ENCODE measurements at regions of chr9 and their contacts with region 1.

Region 1: GRCh38 chr9:20728493-20729220 is 44.6 kb downstream of the FOCAD start:
- DNase-seq: peak; percentile 91
- H3K4me3 ChIP-seq: no peak overlapping the region
- H3K27ac ChIP-seq: peak overlapping the region; percentile 98
- H3K4me1 ChIP-seq: peaks cover 57% of the 10 kb centered on the region
- H3K27me3 ChIP-seq: no peaks in the 10 kb centered on the region
- CTCF ChIP-seq: no peak
- POLR2A ChIP-seq: no peak

Region 2: DNA sequence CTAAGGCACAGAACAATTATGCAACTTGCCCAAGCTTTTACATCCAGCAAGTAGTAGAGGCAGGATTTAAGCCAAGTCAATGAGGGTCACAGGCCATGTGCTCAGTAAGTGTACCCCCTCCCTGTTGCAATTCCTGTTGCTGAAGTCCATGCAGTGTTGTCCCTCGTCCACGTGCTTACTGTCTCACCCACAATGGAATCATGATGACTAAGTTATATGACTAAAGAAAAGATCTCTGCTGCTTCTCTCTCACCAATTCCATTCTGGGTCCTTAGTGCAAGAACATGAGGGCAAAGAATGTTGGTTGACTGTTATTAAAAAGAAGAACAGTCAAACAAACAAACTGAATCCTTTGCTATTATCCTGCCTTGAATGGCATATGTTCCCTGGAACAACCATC is 706.2 kb before region 1 on chr9:
- CTCF ChIA-PET with region 1: no interaction called
- POLR2A ChIA-PET with region 1: no interaction called
- dilution Hi-C with region 1: no loop called
- intact Hi-C with region 1: loop called (anchors 10 kb)
- DNase-seq: peak; percentile 15
- H3K4me3 ChIP-seq: no peak overlapping the region
- H3K27ac ChIP-seq: no peak overlapping the region
- H3K4me1 ChIP-seq: peaks cover 1% of the 10 kb centered on the region
- H3K27me3 ChIP-seq: peaks cover 0 to 2% of the 10 kb centered on the region in 2 experiments
- CTCF ChIP-seq: no peak
- POLR2A ChIP-seq: no peak

Region 3: GRCh38 chr9:20684035-20684872 is 44.4 kb before region 1 on chr9 and contains the start of gene FOCAD:
- CTCF ChIA-PET with region 1: interaction called, 4 read pairs
- POLR2A ChIA-PET with region 1: interaction called, 13 read pairs
- dilution Hi-C with region 1: no loop called
- intact Hi-C with region 1: loop called (anchors 1 kb)
- DNase-seq: peak; percentile 97
- H3K4me3 ChIP-seq: peak within 1 kb of the TSS; percentile 69 to 83 (median 73)
- H3K27ac ChIP-seq: peak within 1 kb of the TSS; percentile 91
- H3K4me1 ChIP-seq: peaks cover 30% of the 10 kb centered on the region
- H3K27me3 ChIP-seq: no peaks in the 10 kb centered on the region
- CTCF ChIP-seq: no peak
- POLR2A ChIP-seq: peak; percentile 97
- total RNA-seq, gene FOCAD: 59.4 and 66.9 TPM in 2 replicates

Region 4: DNA sequence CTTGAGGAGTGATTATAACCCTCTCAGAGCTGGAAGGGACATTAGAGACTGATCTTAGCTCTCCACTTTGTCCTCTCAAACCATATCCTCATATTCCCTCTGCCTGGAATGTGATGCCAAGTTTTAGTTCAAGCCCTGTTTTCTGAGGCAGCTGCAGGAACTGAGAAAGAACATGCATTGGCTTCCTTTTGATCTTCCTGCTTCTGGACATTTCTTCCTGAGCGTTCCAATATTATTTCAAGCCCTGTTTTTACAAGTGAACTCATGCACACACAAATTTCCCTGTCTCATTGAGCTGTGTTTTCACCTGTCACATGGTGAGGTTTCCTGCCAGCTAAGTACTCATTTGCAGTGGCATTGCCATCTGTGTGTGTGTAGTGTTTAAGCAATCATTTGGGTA is 27.6 kb before region 1 on chr9:
- CTCF ChIA-PET with region 1: interaction called, 6 read pairs
- POLR2A ChIA-PET with region 1: no interaction called
- dilution Hi-C with region 1: no loop called
- intact Hi-C with region 1: loop called (anchors 1 kb)
- DNase-seq: peak; percentile 94
- H3K4me3 ChIP-seq: peak overlapping the region in 1 of 3 experiments; percentile 26
- H3K27ac ChIP-seq: peak overlapping the region; percentile 76
- H3K4me1 ChIP-seq: peaks cover 26% of the 10 kb centered on the region
- H3K27me3 ChIP-seq: no peaks in the 10 kb centered on the region
- CTCF ChIP-seq: no peak
- POLR2A ChIP-seq: no peak

Region 5: DNA sequence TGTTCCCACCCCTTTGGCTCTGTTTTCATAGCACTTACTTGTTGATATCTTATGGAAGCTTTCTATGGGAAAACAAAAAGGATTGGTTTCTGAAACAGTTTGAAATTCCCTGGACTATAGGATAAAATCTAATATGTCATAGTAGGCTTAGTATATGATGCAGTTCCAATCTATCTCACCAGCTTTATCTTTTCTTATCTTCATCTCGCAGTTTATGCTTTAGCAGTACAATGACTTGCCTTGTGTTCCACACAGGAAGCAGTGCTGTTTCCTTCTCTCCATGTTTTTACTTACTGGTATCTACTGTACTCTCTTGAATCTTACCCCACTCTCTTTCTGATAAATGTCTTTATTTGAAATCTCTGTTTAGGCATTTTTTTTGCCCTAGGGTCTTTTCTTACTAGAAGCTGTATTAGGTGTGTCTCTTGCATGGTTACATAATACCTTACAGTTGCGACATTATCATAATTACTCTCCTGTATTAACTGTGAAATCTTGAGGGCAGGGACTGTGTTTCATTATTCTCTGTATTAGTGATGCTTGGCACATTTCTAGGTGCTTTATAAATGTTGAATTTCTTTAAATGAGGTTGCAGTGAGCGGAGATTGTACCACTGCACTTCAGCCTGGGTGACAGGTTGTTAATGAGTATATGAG is 31.7 kb after region 1 on chr9:
- CTCF ChIA-PET with region 1: interaction called, 3 read pairs
- POLR2A ChIA-PET with region 1: no interaction called
- dilution Hi-C with region 1: no loop called
- intact Hi-C with region 1: loop called (anchors 2 kb)
- DNase-seq: peak; percentile 88
- H3K4me3 ChIP-seq: no peak overlapping the region
- H3K27ac ChIP-seq: peak overlapping the region; percentile 71
- H3K4me1 ChIP-seq: peaks cover 13% of the 10 kb centered on the region
- H3K27me3 ChIP-seq: no peaks in the 10 kb centered on the region
- CTCF ChIP-seq: no peak
- POLR2A ChIP-seq: no peak

Measured in endothelial cell of umbilical vein (primary cell).